ENCODE measurements at regions of chr17 and their contacts with region 1.

Region 1: DNA sequence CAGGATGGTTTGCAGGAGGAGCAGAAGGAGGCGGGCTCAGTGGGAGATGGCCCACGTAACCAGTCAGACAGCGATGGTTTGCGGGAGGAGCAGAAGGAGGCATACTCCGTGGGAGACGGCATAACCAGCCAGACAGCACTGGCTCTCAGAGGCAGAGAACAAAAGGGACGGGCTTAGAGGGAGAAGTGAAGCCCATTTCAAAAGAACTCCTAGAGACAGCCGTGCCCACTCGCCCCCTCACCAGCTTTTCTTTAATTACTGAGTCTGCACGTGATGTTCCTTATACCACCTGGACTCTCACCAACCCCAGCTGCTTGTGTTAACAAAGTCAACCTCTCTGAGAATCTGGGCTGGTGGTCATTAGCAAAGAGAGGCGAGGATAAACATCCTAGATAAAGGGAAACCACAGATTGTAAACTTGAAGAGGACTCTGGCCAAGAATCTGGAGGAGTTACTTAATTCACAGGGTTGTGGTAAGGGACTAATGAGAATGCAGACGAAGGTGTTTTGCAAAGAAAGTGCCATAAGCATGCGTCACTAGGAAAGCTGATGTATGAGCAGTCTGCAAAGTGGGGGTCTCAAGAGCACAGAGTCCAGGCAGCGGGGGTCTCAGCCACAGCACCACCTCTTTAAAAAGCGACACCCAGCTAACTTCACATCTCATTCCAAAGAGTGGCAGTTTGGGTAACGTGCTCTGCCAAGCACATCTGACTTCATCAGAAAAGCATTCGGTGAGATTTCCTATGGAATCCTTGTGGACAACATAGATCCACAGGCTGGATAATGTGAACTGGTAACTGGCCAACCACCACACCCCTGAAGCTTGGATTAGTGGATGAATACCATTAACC is 51.7 kb downstream of the NXN start:
- DNase-seq: peak; percentile 78 to 84
- H3K4me3 ChIP-seq: no peak overlapping the region
- H3K4me3 Mint-ChIP-seq: peak overlapping the region; percentile 64
- H3K27ac Mint-ChIP-seq: peak overlapping the region; percentile 88
- H3K4me1 ChIP-seq: peaks cover 72% of the 10 kb centered on the region
- H3K4me1 Mint-ChIP-seq: peaks cover 72% of the 10 kb centered on the region
- H3K27me3 ChIP-seq: no peaks in the 10 kb centered on the region
- H3K27me3 Mint-ChIP-seq: no peaks in the 10 kb centered on the region
- CTCF ChIP-seq: no peak

Region 2: DNA sequence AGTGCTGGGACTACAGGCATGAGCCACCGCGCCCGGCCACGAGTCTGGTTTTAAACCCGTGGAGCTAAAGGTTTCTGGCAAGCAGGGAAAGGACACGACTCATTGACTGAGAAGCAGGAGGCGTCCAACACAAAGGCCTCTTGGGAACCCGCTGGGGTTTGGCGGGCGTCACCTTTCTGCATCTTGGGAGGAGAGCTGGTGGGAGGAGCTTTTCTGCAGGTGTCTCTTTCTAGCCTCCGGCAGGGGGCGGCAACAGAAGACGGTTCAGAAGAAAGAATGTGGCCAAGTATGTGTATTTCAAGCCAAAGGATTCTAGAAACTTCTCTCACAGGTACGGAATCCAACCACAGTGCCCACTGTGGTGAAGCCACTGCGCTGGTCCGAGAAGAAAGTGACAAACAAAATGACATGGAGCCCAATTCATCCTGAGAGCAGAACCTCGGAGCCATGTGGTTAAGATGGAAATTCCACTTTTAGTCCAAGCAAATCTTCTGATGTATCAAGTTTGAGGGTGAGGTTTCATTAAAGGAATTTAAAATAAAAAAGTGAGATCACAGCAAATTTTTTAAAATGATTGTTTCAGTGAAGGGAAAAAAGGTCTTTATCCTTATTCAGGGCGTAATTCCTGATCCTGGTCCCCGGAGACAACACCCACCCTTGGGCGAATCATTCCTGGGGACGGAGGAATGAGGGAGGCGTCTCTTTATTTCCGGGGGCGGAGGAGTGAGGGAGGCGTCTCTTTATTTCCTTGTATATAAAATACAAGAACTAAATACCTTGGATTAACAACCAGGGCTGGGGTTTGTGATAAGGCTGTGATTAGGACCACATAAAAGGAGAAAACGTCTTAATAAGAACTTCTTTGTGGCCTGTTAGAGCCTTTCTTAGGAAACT is 48.0 kb before region 1 on chr17:
- CTCF ChIA-PET with region 1: no interaction called
- POLR2A ChIA-PET with region 1: no interaction called
- intact Hi-C with region 1: loop called (anchors 5 kb)
- DNase-seq: peak; percentile 71 to 81
- H3K4me3 ChIP-seq: no peak overlapping the region
- H3K4me3 Mint-ChIP-seq: no peak overlapping the region
- H3K27ac Mint-ChIP-seq: peak overlapping the region; percentile 71
- H3K4me1 ChIP-seq: peaks cover 30% of the 10 kb centered on the region
- H3K4me1 Mint-ChIP-seq: peaks cover 33% of the 10 kb centered on the region
- H3K27me3 ChIP-seq: no peaks in the 10 kb centered on the region
- H3K27me3 Mint-ChIP-seq: no peaks in the 10 kb centered on the region
- CTCF ChIP-seq: peak; percentile 17 to 43

Region 3: GRCh38 chr17:969811-970355 is 42.0 kb after region 1 on chr17:
- CTCF ChIA-PET with region 1: no interaction called
- POLR2A ChIA-PET with region 1: interaction called, 5 read pairs
- intact Hi-C with region 1: loop called (anchors 2 kb)
- DNase-seq: no peak
- H3K4me3 ChIP-seq: peak overlapping the region; percentile 24
- H3K4me3 Mint-ChIP-seq: peak overlapping the region; percentile 74
- H3K27ac Mint-ChIP-seq: peak overlapping the region; percentile 91
- H3K4me1 ChIP-seq: peaks cover 71% of the 10 kb centered on the region
- H3K4me1 Mint-ChIP-seq: peaks cover 46% of the 10 kb centered on the region
- H3K27me3 ChIP-seq: no peaks in the 10 kb centered on the region
- H3K27me3 Mint-ChIP-seq: no peaks in the 10 kb centered on the region
- CTCF ChIP-seq: no peak